ENCODE measurements at regions of chr12 and their contacts with region 1.

Region 1: GRCh38 chr12:49366652-49367380 is 446 bp upstream of the SPATS2 start:
- DNase-seq: peak; percentile 94
- ATAC-seq: peak; percentile 93
- H3K4me3 ChIP-seq: peak overlapping the region; percentile 74
- H3K27ac ChIP-seq: peak overlapping the region; percentile 91
- H3K4me1 ChIP-seq: peaks cover 6% of the 10 kb centered on the region; the same call in 1 of the 2 replicates
- H3K27me3 ChIP-seq: no peaks in the 10 kb centered on the region
- CTCF ChIP-seq: peak; percentile 29; the same call in 1 of the 2 replicates
- POLR2A ChIP-seq: peak; percentile 82; the same call in 1 of the 2 replicates
- RAD21 ChIP-seq: peak; percentile 13; the same call in 1 of the 2 replicates

Region 2: DNA sequence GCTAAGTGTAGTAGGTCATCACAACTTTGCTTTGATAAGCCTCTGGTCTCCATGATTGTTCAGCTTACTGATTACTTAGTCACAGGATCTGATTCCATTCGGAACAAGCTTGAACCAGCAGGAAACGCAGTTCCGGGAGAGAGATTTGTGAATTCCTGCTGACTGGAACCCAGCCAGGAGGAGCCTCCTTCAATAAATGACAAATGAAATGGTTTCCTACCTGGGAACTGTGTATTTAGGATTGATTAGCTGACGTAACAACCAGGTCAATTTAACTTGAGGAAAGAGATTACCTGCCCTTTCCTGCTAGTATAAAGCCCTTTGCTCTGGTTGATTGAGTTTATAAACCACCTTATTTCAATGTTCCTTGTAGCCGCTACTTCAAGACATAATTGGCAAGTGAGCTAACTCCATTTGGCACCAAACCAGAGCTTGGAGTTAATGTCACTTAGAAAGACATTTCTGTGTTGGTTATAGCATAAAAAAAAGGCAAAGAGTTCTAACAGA is 136.9 kb after region 1 on chr12:
- CTCF ChIA-PET with region 1: interaction called, 3 read pairs
- POLR2A ChIA-PET with region 1: no interaction called
- dilution Hi-C with region 1: loop called (anchors 25 kb)
- in situ Hi-C with region 1: loop called (anchors 5 kb)
- intact Hi-C with region 1: no loop called
- DNase-seq: peak; percentile 81
- ATAC-seq: peak; percentile 38; the same call in 1 of the 2 replicates
- H3K4me3 ChIP-seq: no peak overlapping the region
- H3K27ac ChIP-seq: no peak overlapping the region
- H3K4me1 ChIP-seq: peaks cover 5% of the 10 kb centered on the region
- H3K27me3 ChIP-seq: no peaks in the 10 kb centered on the region
- CTCF ChIP-seq: no peak
- POLR2A ChIP-seq: no peak
- RAD21 ChIP-seq: no peak

Region 3: GRCh38 chr12:49567611-49568441 is 201.0 kb after region 1 on chr12 and contains the start of gene MCRS1:
- CTCF ChIA-PET with region 1: no interaction called
- POLR2A ChIA-PET with region 1: no interaction called
- dilution Hi-C with region 1: no loop called
- in situ Hi-C with region 1: no loop called
- intact Hi-C with region 1: loop called (anchors 1 kb)
- DNase-seq: peak; percentile 89
- ATAC-seq: peak; percentile 91
- H3K4me3 ChIP-seq: peak within 1 kb of the TSS; percentile 76
- H3K27ac ChIP-seq: peak within 1 kb of the TSS; percentile 88
- H3K4me1 ChIP-seq: peaks cover 2% of the 10 kb centered on the region; the same call in 1 of the 2 replicates
- H3K27me3 ChIP-seq: no peaks in the 10 kb centered on the region
- CTCF ChIP-seq: no peak
- POLR2A ChIP-seq: peak; percentile 96
- RAD21 ChIP-seq: no peak
- total RNA-seq, gene MCRS1: 60.8 and 72.9 TPM in 2 replicates

Measured in IMR-90 (cell line).